Naive thymus-derived CD8-positive, alpha-beta T cell (primary cell): ENCODE measurements at regions of chr2 and their contacts with region 1.

Region 1: DNA sequence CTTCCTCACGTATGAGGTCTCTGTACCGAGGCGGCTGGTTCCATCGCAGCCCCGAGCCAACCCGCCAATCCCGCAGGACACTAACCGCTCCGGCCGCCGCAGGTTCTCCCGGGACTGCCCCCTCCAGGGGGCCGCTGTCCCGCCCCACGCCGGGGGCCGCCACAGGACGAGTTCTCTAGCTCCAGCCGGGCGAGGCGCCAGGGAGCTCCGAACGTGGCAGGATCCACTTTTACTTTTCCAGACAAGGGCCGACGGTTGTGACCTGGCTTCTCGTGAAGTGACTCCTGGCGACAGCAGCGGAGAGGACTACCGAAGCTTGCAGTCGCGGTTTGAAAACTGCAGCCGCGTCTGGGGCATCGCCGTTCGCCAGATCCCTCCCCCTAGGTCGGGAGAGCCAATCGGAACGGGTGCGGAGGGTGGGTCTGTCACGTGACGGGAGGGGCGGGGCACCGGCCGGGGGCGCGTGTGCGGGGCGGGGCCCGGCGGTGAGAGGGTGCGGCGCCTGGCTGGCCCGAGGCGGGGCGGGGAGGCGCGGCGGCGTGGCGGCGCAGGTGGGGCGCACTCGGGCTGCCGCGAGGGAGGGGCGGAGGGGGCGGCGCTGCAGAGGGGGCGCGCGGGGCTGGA is at the start of gene STK17B:
- DNase-seq: peak; percentile 89 to 99 (median 96)
- ATAC-seq: peak; percentile 56 to 57
- H3K4me3 Mint-ChIP-seq: peak within 1 kb of the TSS; percentile 93 to 99 (median 96)
- H3K27ac Mint-ChIP-seq: peak within 1 kb of the TSS; percentile 94 to 99 (median 96)
- H3K4me1 Mint-ChIP-seq: peaks cover 26 to 51% (median 35%) of the 10 kb centered on the region in 4 donors
- H3K27me3 Mint-ChIP-seq: no peaks in the 10 kb centered on the region
- polyA plus RNA-seq, gene STK17B: 73.5 to 98.3 (median 91.9) TPM

Region 2: DNA sequence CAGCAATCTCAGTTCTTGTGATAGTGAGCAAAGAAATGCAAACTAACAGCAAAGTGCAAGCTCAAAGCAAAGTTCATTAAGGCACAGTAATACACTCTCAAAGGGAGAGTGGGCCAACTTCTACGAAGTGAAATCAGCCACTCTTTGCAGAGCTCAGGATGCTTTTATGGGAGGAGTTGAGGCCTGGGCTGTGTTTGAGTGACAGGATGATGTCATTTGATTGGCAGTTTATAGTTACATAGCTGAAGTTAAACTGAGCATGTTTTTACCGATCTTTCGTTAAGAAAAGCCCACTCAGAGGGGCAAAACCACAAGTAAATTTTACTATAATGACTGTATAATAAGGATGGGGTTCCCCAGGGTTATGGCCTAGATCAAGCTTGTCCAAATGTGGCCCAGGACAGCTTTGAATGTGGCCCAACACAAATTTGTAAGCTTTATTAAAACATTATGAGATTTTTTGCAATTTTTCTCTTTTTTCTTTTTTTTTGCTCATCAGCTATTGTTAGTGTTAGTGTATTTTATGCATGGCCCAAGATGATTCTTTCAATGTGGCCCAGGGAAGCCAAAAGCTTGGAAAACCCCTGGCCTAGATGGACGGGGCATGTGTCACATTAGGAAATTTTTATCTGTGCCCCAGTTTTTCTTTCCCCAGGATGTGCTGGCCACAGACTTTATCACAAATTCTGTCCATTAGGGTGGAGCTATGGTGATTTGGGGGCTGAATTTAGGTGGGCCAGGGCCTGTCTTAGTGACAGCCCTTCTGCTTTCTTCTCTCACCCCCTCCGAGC is 94.4 kb before region 1 on chr2:
- POLR2A ChIA-PET with region 1: interaction called, 35 read pairs
- DNase-seq: no peak
- ATAC-seq: no peak
- H3K4me3 Mint-ChIP-seq: no peak overlapping the region
- H3K27ac Mint-ChIP-seq: no peak overlapping the region
- H3K4me1 Mint-ChIP-seq: peaks cover 8 to 31% (median 22%) of the 10 kb centered on the region in 4 donors
- H3K27me3 Mint-ChIP-seq: no peaks in the 10 kb centered on the region

Region 3: DNA sequence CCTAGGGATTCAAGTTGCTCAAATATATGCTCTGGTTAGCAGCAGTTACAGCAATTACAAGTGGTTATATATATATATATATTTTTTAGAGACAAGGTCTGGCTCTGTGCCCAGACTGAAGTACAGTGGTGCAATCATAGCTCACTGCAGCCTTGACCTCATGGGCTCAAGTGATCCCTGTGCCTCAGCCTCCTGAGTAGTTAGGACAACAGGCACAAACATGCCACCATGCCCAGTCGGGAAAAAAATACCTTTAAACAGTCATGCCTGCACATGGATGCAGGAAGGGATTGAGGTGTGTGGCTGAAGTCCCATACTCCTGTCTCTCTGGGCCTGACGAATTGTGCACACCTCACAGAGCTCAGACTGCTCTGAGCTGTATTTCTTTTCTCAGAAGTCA is 83.2 kb before region 1 on chr2:
- POLR2A ChIA-PET with region 1: no interaction called
- DNase-seq: no peak
- ATAC-seq: no peak
- H3K4me3 Mint-ChIP-seq: no peak overlapping the region
- H3K27ac Mint-ChIP-seq: peak overlapping the region in 1 of 10 donors; percentile 48
- H3K4me1 Mint-ChIP-seq: peaks cover 1 to 33% (median 14%) of the 10 kb centered on the region in 4 donors
- H3K27me3 Mint-ChIP-seq: no peaks in the 10 kb centered on the region

Region 4: DNA sequence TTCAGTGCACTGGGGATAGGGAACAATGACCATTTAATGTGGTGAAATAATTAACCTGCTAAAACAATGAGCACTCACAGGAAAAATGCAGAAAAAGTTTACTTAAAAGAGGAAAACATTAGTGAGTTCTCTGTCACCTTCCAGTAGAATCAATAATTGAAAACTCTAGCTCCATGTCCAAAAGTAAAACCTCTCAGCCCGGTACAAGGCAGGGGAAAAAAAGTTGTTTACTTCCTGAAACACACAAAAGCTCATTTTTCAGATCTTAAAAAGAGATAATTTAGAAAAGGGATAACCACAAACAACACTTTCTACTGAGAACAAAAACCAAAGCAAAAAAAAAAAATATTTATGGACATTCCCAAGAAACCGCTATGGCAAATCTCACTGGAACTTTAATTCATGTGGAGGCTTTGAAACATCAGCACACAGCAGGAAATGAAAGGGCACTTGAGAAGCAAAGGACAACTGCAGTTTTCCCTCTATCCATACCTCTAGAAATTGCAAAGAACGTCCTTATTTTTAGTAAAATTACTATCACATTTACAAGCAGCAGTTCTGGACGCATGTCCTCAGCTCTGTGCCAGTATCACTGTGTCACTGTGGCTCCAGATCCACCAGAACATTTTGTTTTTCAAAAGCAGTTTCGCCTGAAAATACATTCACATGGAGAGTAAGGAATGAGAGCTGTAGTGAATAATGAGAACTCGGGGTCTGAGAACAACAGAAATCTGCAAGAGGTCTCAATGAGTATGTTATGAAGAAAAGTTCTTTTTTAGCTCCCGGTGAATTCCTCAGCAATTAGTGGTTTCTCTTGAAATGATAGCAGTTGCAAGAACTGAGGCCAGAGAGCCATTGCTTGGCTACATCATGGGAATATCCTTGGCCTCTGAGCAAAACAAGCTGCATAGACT is 58.0 kb before region 1 on chr2:
- POLR2A ChIA-PET with region 1: no interaction called
- DNase-seq: no peak
- ATAC-seq: peak in 1 of 2 donors; percentile 20
- H3K4me3 Mint-ChIP-seq: peak overlapping the region in 3 of 10 donors; percentile 9 to 19 (median 18)
- H3K27ac Mint-ChIP-seq: peak overlapping the region in 4 of 10 donors; percentile 25 to 67 (median 44)
- H3K4me1 Mint-ChIP-seq: peaks cover 2 to 19% (median 7%) of the 10 kb centered on the region in 4 donors
- H3K27me3 Mint-ChIP-seq: no peaks in the 10 kb centered on the region

Region 5: DNA sequence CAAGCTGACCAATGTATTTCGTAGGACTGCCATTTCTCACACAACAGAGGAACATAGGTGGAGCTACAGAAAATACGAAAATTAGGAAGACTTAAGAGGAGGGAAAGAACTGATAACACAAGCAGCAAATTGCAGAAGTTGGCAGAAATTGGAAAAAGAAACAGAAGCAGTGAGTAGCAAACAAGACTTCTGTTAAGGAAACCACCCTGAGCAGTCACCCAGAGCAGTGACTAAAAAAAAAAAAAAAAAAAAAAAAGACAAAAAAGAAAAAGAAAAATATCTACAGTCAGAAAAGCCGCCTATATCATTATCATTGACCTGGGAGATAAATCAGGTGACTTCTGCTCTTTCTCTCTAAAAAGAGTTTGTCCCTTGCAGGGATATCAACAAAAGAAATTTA is 21.4 kb before region 1 on chr2:
- POLR2A ChIA-PET with region 1: interaction called, 70 read pairs
- DNase-seq: no peak
- ATAC-seq: peak; percentile 47 to 51
- H3K4me3 Mint-ChIP-seq: peak overlapping the region; percentile 40 to 82 (median 74)
- H3K27ac Mint-ChIP-seq: peak overlapping the region; percentile 88 to 95 (median 93)
- H3K4me1 Mint-ChIP-seq: peaks cover 32 to 96% (median 85%) of the 10 kb centered on the region in 4 donors
- H3K27me3 Mint-ChIP-seq: no peaks in the 10 kb centered on the region

Region 6: GRCh38 chr2:196187898-196188458 is 16.6 kb after region 1 on chr2:
- POLR2A ChIA-PET with region 1: interaction called, 59 read pairs
- DNase-seq: no peak
- ATAC-seq: no peak
- H3K4me3 Mint-ChIP-seq: peak overlapping the region in 1 of 10 donors; percentile 16
- H3K27ac Mint-ChIP-seq: peak overlapping the region in 7 of 10 donors; percentile 2 to 89 (median 76)
- H3K4me1 Mint-ChIP-seq: peaks cover 29 to 82% (median 79%) of the 10 kb centered on the region in 4 donors
- H3K27me3 Mint-ChIP-seq: no peaks in the 10 kb centered on the region

Region 7: GRCh38 chr2:196220671-196221070 is 49.3 kb after region 1 on chr2:
- POLR2A ChIA-PET with region 1: interaction called, 193 read pairs
- DNase-seq: peak in 7 of 10 donors; percentile 25 to 76 (median 57)
- ATAC-seq: peak; percentile 91 to 97
- H3K4me3 Mint-ChIP-seq: peak overlapping the region; percentile 13 to 70 (median 52)
- H3K27ac Mint-ChIP-seq: peak overlapping the region; percentile 46 to 89 (median 85)
- H3K4me1 Mint-ChIP-seq: peaks cover 32 to 79% (median 75%) of the 10 kb centered on the region in 4 donors
- H3K27me3 Mint-ChIP-seq: no peaks in the 10 kb centered on the region

Region 8: DNA sequence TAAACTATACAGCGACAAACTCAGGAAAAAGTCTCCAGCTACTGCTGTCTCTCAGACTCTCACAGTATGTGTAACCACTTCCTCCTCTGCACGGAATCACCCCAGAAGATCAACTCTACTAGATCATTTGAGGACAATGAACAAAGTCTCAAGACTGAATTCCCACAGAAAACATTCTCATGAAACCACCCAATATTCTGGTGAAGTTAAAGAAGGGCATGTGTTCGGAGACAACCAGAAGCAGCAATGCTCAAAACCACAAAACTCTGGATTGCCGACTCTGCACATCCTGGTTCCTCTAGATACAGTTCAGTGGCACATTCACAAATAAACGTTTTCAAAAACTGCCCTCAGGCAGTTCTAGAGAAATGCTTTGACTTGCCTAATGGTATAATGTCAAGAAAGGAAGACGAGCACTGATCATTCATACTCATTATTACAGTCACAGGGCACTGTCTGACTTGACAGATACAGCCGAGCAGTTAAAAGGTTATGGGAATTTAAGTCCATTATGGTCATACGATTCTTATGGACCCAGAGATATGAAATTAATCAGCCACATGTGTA is 91.9 kb after region 1 on chr2:
- POLR2A ChIA-PET with region 1: interaction called, 15 read pairs
- DNase-seq: peak in 9 of 10 donors; percentile 29 to 85 (median 61)
- ATAC-seq: peak; percentile 86 to 92
- H3K4me3 Mint-ChIP-seq: peak overlapping the region; percentile 53 to 80 (median 70)
- H3K27ac Mint-ChIP-seq: peak overlapping the region; percentile 89 to 99 (median 96)
- H3K4me1 Mint-ChIP-seq: peaks cover 31 to 88% (median 69%) of the 10 kb centered on the region in 4 donors
- H3K27me3 Mint-ChIP-seq: no peaks in the 10 kb centered on the region